Head of caudate nucleus (tissue), 42 donors: ENCODE measurements at regions of chr16 and their contacts with region 1.

Region 1: GRCh38 chr16:77236063-77236511 is 36.9 kb downstream of the SYCE1L start:
- DNase-seq: peak; percentile 71 to 96 (median 91)

Region 2: GRCh38 chr16:77298638-77299360 is 62.7 kb after region 1 on chr16:
- intact Hi-C with region 1: no loop called
- DNase-seq: no peak

Region 3: DNA sequence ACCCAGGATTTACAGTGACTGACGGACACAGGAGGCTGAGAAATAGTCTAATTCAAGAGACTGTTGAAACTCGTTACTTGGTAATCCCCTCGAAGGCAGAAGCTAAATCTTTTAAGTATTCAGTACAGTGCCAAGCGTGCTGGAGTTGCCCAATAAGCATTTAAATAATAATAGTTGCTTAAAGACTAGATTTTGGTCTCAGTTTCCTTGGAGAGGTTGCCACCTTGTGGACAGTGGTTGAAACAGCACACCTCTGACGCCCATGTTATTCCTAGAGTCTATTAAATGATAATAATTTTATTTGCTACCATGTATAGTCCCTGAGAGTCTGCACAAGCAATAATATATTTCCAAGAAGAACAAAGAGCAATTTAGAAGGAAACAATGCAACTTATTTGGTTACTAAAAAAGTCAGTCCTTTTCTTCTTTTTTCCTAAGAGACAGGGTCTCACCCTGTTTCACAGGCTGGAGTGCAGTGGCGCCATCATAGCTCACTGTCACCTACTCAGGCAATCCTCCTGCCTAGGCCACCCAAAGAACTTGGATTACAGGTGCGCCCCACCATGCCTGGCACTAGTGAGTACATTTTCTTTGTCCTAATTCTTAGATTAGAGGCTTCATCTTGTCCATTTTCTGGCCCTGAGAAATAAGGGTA is 348.2 kb after region 1 on chr16:
- intact Hi-C with region 1: loop called (anchors 5 kb)
- DNase-seq: peak in 41 of 42 donors; percentile 22 to 84 (median 59)